Posterior vena cava (tissue), 2 donors: ENCODE measurements at regions of chr10 and their contacts with region 1.

Region 1: DNA sequence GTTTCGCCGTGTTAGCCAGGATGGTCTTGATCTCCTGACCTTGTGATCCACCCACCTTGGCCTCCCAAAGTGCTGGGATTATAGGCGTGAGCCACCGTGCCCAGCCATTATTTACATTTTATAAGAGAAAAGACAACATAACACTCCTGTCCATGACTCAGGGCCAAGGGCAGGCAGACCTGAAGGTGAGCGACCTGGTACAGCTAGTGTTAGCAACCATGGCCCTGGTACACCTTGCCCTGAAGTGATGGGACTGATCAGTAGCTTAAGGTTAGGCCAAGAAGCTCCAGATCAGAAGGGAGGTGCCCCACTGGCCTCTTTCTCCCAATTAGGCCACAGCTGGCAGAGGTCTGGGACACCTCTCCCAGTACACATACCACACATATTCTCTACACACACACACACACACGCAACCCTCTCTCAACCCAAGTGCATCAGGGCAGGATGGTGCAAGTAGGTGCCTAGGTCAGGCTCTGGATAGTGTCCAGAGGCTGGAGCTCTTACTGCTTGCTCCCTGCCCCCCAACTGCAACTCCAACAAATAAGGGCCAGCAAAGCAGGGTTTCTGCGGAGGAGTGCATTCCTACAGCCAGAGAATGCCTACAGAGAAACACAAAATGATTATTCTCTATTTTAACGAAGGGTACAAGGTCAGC is 43.8 kb downstream of the DPCD start:
- DNase-seq: no peak

Region 2: DNA sequence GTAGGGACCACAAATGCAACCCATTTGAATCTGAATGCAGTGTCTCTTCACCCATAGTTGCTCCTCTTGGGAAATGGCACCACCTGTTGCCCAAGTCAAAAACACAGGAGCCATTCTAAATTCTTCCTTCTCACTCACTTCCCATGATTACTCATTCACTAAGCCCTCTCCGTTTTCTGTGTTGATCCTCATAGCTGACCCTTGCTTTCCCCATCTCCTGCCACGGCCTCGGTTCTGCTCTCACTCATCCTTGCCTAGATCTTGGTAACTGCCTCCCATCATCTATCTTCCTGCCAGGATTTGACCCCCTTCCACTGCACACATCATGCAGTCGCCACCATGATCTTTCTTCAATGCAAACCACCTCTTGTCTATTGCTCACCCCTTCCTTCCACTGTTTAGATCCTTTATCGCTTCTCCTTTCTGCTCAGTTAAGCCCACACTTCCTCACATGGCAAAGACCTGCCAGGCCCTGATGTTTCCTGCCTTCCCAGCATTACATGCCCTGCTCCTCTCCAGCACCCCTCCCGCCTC is 1531.2 kb before region 1 on chr10:
- intact Hi-C with region 1: no loop called
- DNase-seq: no peak

Region 3: DNA sequence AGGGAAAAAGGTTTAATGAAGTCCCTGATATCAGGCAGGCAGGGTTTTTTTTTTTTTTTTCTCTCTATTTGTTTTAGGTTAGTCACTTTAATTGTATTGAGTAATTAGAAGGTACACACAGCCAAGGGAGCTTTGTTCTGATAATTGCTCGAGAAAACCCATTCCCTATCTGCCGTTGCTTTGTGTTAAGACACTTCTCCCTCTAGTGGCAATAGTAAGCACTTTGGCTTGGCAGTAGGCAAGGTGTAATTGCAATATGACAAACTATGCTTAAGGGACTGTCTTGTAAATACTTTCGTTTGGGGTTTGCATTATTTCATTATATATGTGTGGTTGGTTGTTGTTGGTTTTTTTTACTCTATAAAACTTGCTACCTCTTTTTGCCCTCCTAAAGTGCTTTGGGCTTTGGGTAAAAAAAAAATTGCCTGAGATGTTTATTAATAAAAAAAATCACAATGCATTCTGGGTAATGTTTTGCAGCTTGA is 164.6 kb before region 1 on chr10:
- intact Hi-C with region 1: no loop called
- DNase-seq: no peak

Region 4: GRCh38 chr10:101647255-101647654 is 15.3 kb after region 1 on chr10:
- intact Hi-C with region 1: loop called in 1 of 2 experiments (anchors 1 kb)
- DNase-seq: no peak

Region 5: DNA sequence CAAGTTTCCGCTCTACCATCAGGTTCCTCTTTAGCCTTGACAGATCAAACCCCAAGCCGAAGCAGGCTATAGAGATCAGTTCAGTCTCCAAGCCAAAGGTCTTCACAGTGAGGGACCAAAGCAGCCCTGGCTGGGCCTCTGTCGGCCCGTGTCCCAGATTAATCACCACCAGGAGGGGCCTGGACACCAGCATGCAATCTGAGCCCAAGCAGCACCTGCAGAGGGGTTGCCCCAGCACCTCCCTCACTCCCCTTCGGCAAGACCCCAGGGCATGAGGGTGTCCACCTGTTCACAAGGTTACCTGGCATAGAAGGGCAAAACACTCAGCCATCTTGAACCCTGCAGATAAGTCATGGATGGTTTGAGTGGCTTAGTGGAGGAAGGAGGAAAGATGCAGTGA is 27.0 kb after region 1 on chr10:
- intact Hi-C with region 1: no loop called
- DNase-seq: no peak

Region 6: GRCh38 chr10:101669181-101669580 is 37.2 kb after region 1 on chr10:
- intact Hi-C with region 1: loop called in 1 of 2 experiments (anchors 1 kb)
- DNase-seq: no peak

Region 7: DNA sequence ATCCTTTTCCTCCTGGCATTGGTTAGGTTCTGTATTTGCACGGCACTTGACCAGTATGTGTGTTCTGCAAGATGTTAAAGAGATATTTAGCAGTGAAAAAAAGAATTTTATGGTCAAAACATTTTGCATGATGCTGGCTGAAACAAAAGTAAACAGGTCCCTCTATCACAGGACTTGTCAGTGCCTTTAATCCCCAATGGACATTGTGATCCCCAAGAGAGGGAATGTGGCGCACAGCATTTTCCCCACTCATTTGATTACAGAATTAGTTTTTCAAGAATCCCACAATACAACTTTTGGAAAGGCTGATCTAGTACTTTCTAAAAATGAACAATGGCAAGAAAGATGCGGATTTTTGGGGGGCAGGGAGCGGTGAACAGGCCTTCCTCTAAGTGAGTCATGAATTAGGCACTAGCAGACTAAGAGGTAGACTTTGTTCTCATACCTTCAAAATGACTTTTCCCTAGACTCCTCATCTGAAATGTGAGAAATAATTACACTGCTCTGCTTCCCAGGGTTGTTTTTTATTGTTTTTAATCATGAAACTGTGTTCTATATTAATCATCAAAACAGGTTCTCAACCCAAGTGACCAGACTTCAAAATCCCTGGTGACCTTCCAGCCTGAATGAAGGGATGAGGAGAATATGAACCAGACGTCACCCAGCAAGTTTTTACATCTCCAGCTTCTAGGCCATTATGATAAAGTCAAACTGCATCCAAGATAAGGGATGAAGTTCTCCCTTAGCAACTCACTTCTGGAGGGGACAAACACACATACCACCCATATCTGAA is 54.4 kb after region 1 on chr10:
- intact Hi-C with region 1: no loop called
- DNase-seq: no peak